ENCODE measurements at regions of chr1 and their contacts with region 1.

Region 1: DNA sequence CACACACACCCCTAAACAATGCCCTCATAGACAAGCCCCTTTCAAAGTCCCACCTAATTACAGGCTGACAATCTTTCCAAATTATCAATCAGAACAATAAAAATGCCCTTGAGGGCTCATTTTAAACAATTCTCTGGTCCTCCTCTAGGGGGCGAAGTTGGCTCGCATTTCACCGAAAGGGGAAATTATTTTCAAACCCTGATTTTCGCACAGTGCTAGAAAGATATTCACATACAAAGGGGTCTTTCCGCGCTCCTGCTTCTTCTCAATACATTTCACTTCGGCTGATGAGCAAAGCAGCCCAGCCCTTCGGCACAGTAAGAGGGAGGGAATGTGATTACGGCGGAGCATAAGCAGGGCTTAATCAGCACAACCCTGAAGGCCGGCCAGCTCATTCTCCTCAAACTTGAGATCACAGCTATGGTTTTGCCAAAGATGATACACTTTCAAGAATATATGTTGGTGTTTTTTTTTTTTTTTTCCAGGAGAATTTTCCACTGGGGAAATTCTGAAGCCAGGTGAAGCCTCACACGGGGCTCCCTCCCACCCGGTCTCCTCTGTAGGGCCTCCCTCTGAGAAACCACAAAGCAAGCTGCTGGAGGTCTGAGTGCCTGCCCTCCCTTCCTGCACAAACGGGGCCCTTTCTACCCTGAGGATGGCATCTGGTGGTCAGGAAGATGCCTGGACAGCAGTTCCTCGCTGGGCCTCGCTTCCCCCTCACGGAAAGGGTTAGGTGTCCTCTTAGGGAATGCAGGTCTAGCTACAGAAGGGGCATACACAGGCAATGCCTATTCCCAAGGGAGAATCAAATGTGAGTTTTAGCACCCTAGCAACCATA is 66.9 kb downstream of the GNG12 start:
- DNase-seq: peak; percentile 84
- H3K4me3 ChIP-seq: no peak overlapping the region
- H3K27ac ChIP-seq: peak overlapping the region; percentile 58
- H3K4me1 ChIP-seq: peaks cover 23% of the 10 kb centered on the region
- H3K27me3 ChIP-seq: no peaks in the 10 kb centered on the region
- CTCF ChIP-seq: peak; percentile 47 to 72
- POLR2A ChIP-seq: no peak

Region 2: DNA sequence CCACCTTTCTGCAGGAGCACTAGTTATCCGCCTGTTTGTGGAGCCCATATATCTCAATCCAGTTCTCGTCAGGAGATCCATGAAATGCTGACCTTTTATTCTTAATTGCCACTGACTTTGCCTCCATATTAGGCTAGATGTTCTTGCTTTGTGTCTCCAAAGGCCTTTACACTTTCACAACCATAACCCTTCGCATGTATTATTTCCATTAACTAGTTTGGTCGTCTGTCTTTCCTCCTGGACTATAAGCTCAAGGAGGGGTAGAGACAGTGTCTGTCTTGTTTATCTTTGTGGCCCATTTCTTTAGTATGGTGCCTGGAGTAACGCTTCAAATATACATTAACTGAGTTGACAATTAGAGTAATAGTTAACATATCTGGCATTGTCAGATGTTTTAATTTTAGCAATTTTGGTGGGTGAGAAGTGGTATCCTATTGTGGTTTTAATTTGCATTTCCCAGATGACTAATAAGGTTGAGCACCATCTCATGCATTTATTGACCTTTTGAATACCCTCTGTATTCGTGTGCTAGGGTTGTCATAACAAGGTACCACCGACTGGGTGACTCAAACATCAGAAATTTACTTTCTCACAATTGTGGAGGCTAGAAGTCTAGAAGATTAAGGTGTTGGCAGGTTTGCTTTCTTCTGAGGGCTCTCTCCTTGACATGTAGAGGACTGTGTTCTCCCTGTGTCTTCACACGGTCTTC is 480.4 kb before region 1 on chr1:
- CTCF ChIA-PET with region 1: no interaction called
- POLR2A ChIA-PET with region 1: no interaction called
- dilution Hi-C with region 1: no loop called
- intact Hi-C with region 1: no loop called
- DNase-seq: peak; percentile 30
- H3K4me3 ChIP-seq: no peak overlapping the region
- H3K27ac ChIP-seq: peak overlapping the region; percentile 45
- H3K4me1 ChIP-seq: peaks cover 11% of the 10 kb centered on the region
- H3K27me3 ChIP-seq: no peaks in the 10 kb centered on the region
- CTCF ChIP-seq: no peak
- POLR2A ChIP-seq: no peak

Region 3: GRCh38 chr1:67535474-67535873 is 230.9 kb before region 1 on chr1:
- CTCF ChIA-PET with region 1: interaction called, 392 read pairs
- POLR2A ChIA-PET with region 1: no interaction called
- dilution Hi-C with region 1: loop called (anchors 25 kb)
- intact Hi-C with region 1: no loop called
- DNase-seq: peak; percentile 92
- H3K4me3 ChIP-seq: no peak overlapping the region
- H3K27ac ChIP-seq: no peak overlapping the region
- H3K4me1 ChIP-seq: peaks cover 10% of the 10 kb centered on the region
- H3K27me3 ChIP-seq: no peaks in the 10 kb centered on the region
- CTCF ChIP-seq: peak; percentile 93 to 94
- POLR2A ChIP-seq: no peak

Region 4: DNA sequence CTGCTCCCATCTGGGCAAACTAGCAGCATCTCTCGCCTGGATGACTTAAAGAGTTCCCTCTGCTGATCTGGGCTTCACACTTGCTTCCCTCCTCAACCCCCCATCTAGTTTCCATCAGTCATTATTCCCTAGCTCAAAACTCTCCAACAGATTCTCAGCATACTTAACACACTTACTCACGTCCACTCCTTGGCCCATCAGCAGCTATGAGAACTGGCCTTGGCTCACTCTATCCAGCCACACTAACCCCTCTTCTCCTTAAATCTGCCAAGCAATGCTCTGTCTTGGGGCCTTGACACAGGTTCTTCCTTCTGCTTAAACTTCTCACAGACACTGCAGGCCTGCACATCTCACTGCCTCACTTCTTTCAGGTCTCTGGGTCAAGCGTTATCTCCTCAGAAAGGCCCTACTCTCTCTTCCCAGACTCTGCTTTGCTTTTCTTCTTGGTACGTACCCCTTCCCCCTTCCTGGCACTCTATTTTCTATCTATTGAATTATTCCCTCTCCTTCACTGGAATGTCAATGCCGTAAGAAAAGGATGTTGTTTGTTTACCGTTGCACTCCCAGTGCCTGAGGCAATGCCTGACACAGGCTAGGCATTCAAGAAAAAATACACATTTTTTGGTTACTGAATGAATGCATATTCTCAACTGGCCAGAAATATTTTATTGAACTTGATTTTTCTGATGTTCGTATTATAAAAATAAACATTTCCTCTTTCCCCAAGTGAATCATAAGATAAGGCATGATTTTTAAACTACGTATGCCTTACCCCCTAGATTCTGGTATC is 25.5 kb after region 1 on chr1:
- CTCF ChIA-PET with region 1: interaction called, 19 read pairs
- POLR2A ChIA-PET with region 1: interaction called, 4 read pairs
- dilution Hi-C with region 1: no loop called
- intact Hi-C with region 1: loop called (anchors 1 kb)
- DNase-seq: peak; percentile 87
- H3K4me3 ChIP-seq: no peak overlapping the region
- H3K27ac ChIP-seq: peak overlapping the region; percentile 92
- H3K4me1 ChIP-seq: peaks cover 96% of the 10 kb centered on the region
- H3K27me3 ChIP-seq: no peaks in the 10 kb centered on the region
- CTCF ChIP-seq: no peak
- POLR2A ChIP-seq: no peak

Region 5: GRCh38 chr1:67840449-67840848 is 74.1 kb after region 1 on chr1:
- CTCF ChIA-PET with region 1: interaction called, 108 read pairs
- POLR2A ChIA-PET with region 1: interaction called, 3 read pairs
- dilution Hi-C with region 1: no loop called
- intact Hi-C with region 1: loop called (anchors 2 kb)
- DNase-seq: peak; percentile 96
- H3K4me3 ChIP-seq: no peak overlapping the region
- H3K27ac ChIP-seq: peak overlapping the region; percentile 82
- H3K4me1 ChIP-seq: peaks cover 39% of the 10 kb centered on the region
- H3K27me3 ChIP-seq: no peaks in the 10 kb centered on the region
- CTCF ChIP-seq: no peak
- POLR2A ChIP-seq: peak; percentile 57

Region 6: GRCh38 chr1:68028566-68028965 is 262.2 kb after region 1 on chr1:
- CTCF ChIA-PET with region 1: no interaction called
- POLR2A ChIA-PET with region 1: no interaction called
- dilution Hi-C with region 1: no loop called
- intact Hi-C with region 1: no loop called
- DNase-seq: no peak
- H3K4me3 ChIP-seq: no peak overlapping the region
- H3K27ac ChIP-seq: no peak overlapping the region
- H3K4me1 ChIP-seq: peaks cover 4% of the 10 kb centered on the region
- H3K27me3 ChIP-seq: no peaks in the 10 kb centered on the region
- CTCF ChIP-seq: no peak
- POLR2A ChIP-seq: no peak

Region 7: DNA sequence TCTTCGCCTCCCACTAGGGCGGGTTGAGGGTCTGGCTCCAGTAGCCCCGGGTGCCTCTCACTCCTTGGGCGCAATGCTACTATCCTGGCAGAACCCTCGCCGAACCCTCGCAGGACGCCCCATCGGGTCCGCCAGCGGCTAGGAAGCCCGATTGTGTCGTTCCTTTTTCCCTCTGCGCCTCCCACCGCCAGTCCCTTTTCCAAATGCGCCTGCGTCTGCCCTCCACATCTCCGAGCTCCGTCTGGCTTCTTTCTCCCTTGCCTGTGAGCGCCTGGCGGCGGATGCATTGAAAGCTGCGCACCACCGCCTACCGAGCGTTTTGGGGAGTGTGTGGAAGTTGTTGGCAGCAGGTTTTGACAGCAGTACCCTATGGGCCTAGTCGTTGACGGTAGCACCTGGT is 285.1 kb after region 1 on chr1:
- CTCF ChIA-PET with region 1: interaction called, 30 read pairs
- POLR2A ChIA-PET with region 1: no interaction called
- dilution Hi-C with region 1: no loop called
- intact Hi-C with region 1: loop called (anchors 1 kb)
- DNase-seq: peak; percentile 77
- H3K4me3 ChIP-seq: peak overlapping the region in 2 of 3 experiments; percentile 42 to 49
- H3K27ac ChIP-seq: no peak overlapping the region
- H3K4me1 ChIP-seq: no peaks in the 10 kb centered on the region
- H3K27me3 ChIP-seq: no peaks in the 10 kb centered on the region
- CTCF ChIP-seq: peak; percentile 39 to 59
- POLR2A ChIP-seq: peak; percentile 20

Region 8: DNA sequence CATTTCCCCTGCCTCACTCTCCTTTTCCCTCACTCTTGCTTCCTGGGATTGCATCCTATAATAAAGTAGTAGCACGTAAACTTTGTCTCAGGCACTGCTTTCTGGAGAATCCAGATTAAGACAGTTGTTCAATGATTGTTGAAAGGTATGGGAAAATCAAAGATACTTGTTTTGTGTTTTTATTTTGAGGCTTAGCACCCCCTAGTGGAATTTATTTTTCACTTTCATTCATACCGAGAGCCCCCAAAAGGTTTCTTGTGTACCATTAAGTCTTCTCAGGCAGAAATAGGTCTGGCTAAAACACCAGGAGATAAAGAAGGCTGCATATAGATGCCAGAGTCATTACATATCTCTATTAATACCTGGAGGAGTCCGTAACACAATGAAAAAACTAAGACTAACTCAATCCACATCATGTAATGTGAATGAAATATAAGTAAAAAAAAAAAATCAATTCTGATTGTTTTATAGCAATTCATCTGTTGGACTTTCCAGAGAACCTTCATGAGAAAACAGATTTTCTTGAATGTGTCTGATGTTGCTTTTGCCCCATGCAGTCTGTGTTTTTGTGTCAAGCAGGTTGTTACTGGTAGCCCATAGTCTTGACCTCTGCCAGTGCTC is 579.9 kb after region 1 on chr1:
- CTCF ChIA-PET with region 1: interaction called, 8 read pairs
- POLR2A ChIA-PET with region 1: no interaction called
- dilution Hi-C with region 1: no loop called
- intact Hi-C with region 1: loop called (anchors 1 kb)
- DNase-seq: peak; percentile 68
- H3K4me3 ChIP-seq: no peak overlapping the region
- H3K27ac ChIP-seq: no peak overlapping the region
- H3K4me1 ChIP-seq: no peaks in the 10 kb centered on the region
- H3K27me3 ChIP-seq: no peaks in the 10 kb centered on the region
- CTCF ChIP-seq: peak; percentile 37 to 39
- POLR2A ChIP-seq: no peak